OCI-LY7 (cell line): ENCODE measurements at regions of chr12 and their contacts with region 1.

Region 1: GRCh38 chr12:25099010-25099409 is 96.0 kb downstream of the DNAI7 start:
- DNase-seq: no peak
- H3K4me3 ChIP-seq: no peak overlapping the region
- H3K27ac ChIP-seq: no peak overlapping the region
- H3K4me1 ChIP-seq: no peaks in the 10 kb centered on the region
- CTCF ChIP-seq: no peak

Region 2: DNA sequence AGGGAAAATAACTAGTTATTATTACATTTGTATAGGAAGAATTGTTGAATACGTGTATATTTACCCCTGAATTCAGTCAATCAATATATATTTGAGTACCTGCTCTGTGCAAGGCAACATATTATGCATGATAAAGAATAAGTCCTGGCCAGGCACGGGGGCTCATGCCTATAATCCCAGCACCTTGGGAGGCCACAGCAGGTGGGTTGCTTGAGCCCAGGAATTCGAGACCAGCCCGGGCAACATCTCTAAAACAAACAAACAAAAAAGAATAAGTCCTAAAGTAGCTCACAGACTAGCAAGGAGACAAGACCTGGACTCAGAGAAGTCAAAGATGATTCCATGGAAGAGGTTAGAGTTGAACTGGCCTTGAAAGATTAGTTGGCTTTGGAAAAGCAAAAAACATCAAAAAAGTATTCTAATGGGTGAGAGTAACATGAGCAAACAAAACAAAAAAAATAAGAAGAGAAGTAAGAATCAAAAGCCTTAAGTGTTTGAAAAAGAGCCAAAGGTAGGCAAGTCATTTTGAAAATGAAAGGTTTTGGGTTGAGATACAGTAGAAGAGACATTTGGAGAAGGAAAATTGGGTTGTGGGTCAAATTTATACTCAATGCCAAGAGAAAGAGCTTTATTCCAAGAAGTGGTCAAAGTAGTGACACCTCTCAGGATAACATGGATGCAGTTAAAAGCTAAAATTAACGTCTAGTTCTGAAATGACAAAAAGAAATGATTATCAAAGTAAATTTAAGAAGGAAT is 35.0 kb before region 1 on chr12:
- CTCF ChIA-PET with region 1: no interaction called
- POLR2A ChIA-PET with region 1: no interaction called
- intact Hi-C with region 1: loop called (anchors 5 kb)
- DNase-seq: no peak
- H3K4me3 ChIP-seq: no peak overlapping the region
- H3K27ac ChIP-seq: no peak overlapping the region
- H3K4me1 ChIP-seq: peaks cover 47% of the 10 kb centered on the region
- CTCF ChIP-seq: no peak

Region 3: DNA sequence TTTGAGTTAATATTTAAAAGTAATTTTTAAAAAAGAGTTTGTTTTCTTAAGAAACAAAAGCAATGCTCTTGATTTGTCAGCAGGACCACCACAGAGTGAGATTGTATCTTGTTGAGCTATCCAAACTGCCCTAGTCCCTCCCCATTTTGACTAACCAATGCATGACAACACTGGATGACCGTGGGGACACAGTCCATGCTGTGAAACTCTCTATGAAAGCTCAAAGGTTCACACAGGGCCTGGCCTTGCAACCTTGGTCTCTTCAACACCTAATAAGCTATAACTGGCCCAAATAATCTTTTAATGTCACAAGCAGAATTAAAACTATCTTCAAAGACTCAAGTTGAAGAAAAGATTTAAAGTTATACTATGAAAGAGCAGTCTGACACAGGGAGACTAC is 109.5 kb after region 1 on chr12:
- CTCF ChIA-PET with region 1: no interaction called
- POLR2A ChIA-PET with region 1: no interaction called
- intact Hi-C with region 1: no loop called
- DNase-seq: no peak
- H3K4me3 ChIP-seq: no peak overlapping the region
- H3K27ac ChIP-seq: no peak overlapping the region
- H3K4me1 ChIP-seq: no peaks in the 10 kb centered on the region
- CTCF ChIP-seq: no peak